Activated B cell treated with CpG ODN at 0.5 μM for 24 hours (primary cell): ENCODE measurements at regions of chr15 and their contacts with region 1.

Region 1: DNA sequence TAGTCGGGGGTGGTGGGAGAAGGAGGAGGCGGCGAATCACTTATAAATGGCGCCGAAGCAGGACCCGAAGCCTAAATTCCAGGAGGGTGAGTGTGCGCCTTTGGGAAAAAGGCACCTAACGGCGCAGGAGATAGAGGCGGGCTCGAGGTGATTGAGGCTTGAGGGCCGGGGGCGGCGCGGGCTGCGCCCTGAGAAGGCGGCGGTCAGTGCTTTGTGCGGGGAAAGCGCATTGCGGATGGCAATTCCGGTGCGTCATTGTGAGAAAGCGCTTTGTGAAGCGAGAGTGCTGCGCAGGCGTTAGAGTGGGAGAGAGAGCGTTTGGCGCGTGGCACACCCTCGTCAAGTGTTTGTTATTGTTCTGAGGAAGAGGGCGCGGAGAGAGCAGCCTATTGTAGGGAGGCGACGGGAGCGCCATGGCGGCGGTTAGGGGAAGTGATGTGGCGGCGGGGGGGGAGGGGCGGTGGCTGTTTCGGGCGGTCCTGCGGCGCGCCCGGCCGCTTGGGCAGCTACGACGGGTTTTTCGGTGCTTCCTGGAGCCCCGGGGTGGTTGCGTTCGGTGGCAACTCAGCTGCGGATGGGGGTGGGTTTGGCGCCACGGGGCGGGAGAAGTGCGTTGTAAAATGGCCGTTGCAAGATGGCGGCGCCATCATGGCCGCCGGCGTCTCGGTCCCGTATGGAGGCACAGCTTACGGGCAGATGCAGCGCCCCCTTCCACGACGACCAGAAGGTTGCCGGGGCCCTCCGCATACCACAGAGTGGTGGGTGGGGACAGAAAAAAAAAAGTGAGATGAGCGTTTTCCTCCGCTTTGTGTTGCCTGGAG is 492 bp downstream of the MORF4L1 start:
- DNase-seq: peak; percentile 81
- ATAC-seq: peak; percentile 72
- H3K4me3 Mint-ChIP-seq: peak overlapping the region; percentile 98
- H3K27ac Mint-ChIP-seq: peak overlapping the region; percentile 100
- H3K4me1 Mint-ChIP-seq: peaks cover 39% of the 10 kb centered on the region
- H3K27me3 Mint-ChIP-seq: no peaks in the 10 kb centered on the region
- CTCF ChIP-seq: no peak

Region 2: GRCh38 chr15:78761891-78762385 is 111.2 kb before region 1 on chr15:
- CTCF ChIA-PET with region 1: interaction called, 6 read pairs
- POLR2A ChIA-PET with region 1: interaction called, 46 read pairs
- intact Hi-C with region 1: loop called (anchors 1 kb)
- DNase-seq: no peak
- ATAC-seq: no peak
- H3K4me3 Mint-ChIP-seq: peak overlapping the region; percentile 46
- H3K27ac Mint-ChIP-seq: peak overlapping the region; percentile 77
- H3K4me1 Mint-ChIP-seq: peaks cover 62% of the 10 kb centered on the region
- H3K27me3 Mint-ChIP-seq: no peaks in the 10 kb centered on the region
- CTCF ChIP-seq: no peak

Region 3: DNA sequence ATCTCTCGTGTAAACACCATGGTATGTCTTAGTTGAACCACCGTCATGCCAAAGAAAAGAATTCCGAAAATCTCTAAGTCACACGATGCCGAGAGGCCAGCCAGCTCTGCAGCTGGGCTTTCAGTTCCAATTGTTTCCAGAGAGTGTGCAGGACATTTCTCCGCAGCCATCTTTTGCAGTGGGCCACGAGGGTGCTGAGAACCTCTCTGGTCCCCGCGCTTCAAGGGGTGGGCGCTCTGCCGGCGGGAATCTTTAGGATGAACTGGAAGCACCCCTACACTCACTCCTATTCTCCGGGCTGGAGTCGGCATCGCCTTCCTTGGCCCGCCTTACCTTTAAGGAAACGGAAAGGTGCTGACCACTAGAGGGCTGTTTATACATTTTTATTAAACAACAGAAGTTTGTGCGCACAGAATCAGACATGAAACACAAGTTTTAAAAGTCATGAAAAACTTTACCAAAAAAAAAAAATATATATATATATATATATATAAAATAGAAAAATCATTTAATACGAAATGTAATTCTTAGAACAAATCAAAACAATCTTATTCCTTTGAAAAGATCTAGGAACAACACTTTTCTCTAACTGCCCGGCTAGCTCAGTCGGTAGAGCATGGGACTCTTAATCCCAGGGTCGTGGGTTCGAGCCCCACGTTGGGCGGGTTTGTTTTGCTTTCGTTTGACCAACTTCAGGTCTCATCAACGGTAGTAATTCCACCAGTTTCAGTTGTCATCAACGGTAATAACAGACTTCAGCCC is 13.0 kb before region 1 on chr15:
- CTCF ChIA-PET with region 1: interaction called, 16 read pairs
- POLR2A ChIA-PET with region 1: interaction called, 12 read pairs
- intact Hi-C with region 1: loop called (anchors 1 kb)
- DNase-seq: peak; percentile 53
- ATAC-seq: peak; percentile 91
- H3K4me3 Mint-ChIP-seq: peak overlapping the region; percentile 85
- H3K27ac Mint-ChIP-seq: peak overlapping the region; percentile 84
- H3K4me1 Mint-ChIP-seq: peaks cover 9% of the 10 kb centered on the region
- H3K27me3 Mint-ChIP-seq: no peaks in the 10 kb centered on the region
- CTCF ChIP-seq: no peak

Region 4: DNA sequence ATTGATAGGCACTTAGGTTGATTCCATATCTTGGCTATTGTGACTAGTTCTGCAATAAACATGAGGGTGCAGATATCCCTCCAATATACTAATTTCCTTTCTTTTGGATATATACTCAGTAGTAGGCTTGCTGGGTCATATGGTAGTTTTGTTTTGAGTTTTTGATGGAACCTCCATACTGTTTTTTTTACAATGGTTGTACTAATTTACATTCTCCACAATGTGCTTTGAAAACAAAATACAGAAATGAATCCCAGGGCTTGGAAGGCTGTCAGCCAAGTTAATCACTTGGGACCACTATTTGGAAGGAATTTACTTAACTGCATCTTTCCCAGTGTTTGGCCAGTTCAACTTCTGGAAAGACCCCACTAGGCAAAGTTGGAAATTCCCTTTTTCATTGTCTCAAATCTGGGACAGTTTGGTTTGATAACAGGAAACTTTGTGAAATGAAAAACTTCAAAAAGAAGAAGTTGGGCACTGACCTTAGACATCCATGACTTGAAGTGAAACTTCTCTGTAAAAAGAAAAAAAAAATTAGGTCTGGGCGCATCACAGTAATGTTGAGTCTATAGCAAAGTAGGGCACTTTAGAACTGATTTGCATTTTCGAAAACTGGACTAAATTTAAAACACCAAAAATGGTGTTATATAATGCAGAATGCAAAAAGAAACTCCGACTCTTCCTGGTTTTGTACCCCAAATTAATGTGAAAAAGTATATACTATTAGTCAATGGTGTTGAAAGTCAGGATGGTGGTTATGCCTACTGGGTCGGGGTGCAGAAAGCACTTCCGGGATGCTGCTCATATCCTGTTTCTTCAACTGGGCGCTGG is 65.7 kb after region 1 on chr15:
- CTCF ChIA-PET with region 1: interaction called, 3 read pairs
- POLR2A ChIA-PET with region 1: interaction called, 13 read pairs
- intact Hi-C with region 1: loop called (anchors 1 kb)
- DNase-seq: no peak
- ATAC-seq: peak; percentile 80
- H3K4me3 Mint-ChIP-seq: peak overlapping the region; percentile 78
- H3K27ac Mint-ChIP-seq: peak overlapping the region; percentile 96
- H3K4me1 Mint-ChIP-seq: peaks cover 80% of the 10 kb centered on the region
- H3K27me3 Mint-ChIP-seq: no peaks in the 10 kb centered on the region
- CTCF ChIP-seq: no peak

Region 5: DNA sequence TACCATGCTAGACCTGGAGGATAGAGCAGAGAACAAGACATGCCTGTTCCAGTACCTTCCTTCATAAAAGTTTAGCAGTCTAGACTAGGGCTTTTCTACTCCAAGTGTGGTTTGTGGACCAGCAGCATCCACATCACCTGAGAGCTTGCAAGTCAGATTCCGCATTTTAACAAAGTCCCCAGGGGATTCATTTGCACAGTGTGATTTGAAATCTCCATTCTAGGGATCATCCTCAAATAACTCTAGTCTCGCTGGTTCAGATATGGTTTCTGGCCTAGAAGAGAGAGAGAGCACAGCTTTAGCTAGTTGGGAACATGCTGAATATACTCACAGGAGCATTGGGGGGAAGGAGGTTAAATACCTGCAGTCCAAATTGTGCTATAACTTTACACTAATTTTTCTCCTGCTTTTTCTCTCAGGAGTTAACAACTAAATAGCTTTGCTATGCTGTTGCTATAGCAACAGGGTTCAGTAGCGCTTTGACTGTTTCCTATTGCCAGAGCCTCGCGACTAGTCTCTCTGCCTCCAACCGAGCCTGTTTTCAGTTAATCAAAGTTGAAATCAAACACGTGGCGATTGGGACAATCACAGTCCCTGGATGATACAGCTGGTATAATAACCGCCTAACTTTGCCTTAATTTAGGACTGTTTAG is 281.4 kb after region 1 on chr15:
- CTCF ChIA-PET with region 1: no interaction called
- POLR2A ChIA-PET with region 1: no interaction called
- intact Hi-C with region 1: no loop called
- DNase-seq: no peak
- ATAC-seq: no peak
- H3K4me3 Mint-ChIP-seq: no peak overlapping the region
- H3K27ac Mint-ChIP-seq: no peak overlapping the region
- H3K4me1 Mint-ChIP-seq: no peaks in the 10 kb centered on the region
- H3K27me3 Mint-ChIP-seq: peaks cover 3% of the 10 kb centered on the region
- CTCF ChIP-seq: no peak